ENCODE measurements at regions of chr17 and their contacts with region 1.

Region 1: DNA sequence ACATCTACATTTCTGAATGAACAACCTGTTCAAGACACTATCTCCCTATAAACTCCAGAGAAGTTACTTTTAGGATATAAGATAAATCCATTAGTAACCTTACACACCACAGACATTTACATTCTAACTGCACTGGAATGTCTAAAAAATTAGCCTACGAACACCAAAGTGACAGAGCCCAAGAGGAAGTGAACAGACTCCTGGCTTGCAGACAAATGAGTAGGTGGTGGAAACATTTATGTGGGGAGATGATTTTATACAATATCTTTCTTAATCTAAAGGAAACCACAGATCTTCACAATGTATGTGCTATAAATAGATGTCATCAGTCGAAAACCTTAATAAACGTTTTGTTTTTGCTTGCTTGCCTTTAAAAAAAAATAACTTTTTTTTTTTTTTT is 18.8 kb downstream of the ZNF652 start:
- DNase-seq: peak; percentile 73
- H3K4me3 Mint-ChIP-seq: peak overlapping the region; percentile 89
- H3K27ac Mint-ChIP-seq: peak overlapping the region; percentile 94
- H3K4me1 Mint-ChIP-seq: peaks cover 48% of the 10 kb centered on the region
- H3K27me3 Mint-ChIP-seq: peaks cover 7% of the 10 kb centered on the region

Region 2: DNA sequence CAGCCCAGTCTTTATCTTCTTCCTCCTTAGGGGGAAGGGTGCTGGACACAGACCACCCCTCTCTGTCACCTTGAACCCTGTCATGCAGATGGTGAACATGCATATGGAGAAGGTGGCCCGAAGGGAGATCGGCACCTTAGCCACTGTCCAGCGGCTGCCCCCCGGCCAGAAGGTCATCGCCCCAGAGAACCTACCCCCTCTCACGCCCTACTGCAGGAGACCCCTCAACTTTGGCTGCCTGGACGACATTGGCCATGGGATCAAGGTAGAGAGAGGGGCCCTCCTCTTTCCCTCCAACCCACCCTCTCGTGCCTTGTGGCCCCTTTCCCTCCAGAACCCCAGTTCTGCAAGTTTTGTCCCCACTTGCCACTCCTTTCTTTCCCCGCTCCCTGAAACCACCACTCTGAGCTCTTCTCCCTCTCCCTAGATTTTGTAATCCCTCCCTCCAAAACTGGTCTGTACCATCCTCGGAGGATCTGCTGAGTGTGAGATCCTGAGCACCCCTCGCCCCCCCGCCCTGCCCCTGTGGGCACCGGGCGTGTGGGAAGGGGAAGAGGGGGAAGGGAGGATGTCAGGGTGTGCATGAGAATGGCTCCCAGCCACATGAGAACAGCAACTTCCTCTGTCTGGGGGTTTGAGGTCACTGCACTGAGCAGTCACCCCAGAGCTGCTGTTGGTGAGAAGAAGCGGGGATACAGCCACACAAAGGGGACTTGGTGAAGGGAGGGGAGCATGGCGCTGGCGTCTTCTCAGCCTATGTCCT is 125.4 kb before region 1 on chr17:
- intact Hi-C with region 1: loop called (anchors 5 kb)
- DNase-seq: peak; percentile 91
- H3K4me3 Mint-ChIP-seq: peak overlapping the region; percentile 80
- H3K27ac Mint-ChIP-seq: peak overlapping the region; percentile 87
- H3K4me1 Mint-ChIP-seq: peaks cover 55% of the 10 kb centered on the region
- H3K27me3 Mint-ChIP-seq: no peaks in the 10 kb centered on the region

Region 3: DNA sequence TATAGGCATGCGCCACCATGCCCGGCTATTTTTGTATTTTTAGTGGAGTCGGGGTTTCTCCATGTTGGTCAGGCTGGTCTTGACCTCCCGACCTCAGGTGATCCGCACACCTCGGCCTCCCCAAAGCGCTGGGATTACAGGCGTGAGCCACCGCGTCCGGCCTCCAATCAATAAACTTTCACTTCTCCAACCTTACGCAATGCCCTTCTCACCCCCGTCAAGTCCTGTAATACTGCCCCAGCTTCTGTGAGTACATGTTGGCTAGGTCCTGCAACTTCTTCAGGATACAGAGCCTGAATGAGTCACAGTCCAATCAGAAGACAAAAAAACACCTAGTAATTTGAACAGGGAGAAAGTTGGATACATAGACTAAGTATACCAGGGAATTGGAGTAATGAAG is 65.6 kb before region 1 on chr17:
- intact Hi-C with region 1: no loop called
- DNase-seq: no peak
- H3K4me3 Mint-ChIP-seq: no peak overlapping the region
- H3K27ac Mint-ChIP-seq: no peak overlapping the region
- H3K4me1 Mint-ChIP-seq: no peaks in the 10 kb centered on the region
- H3K27me3 Mint-ChIP-seq: peaks cover 3% of the 10 kb centered on the region

Region 4: DNA sequence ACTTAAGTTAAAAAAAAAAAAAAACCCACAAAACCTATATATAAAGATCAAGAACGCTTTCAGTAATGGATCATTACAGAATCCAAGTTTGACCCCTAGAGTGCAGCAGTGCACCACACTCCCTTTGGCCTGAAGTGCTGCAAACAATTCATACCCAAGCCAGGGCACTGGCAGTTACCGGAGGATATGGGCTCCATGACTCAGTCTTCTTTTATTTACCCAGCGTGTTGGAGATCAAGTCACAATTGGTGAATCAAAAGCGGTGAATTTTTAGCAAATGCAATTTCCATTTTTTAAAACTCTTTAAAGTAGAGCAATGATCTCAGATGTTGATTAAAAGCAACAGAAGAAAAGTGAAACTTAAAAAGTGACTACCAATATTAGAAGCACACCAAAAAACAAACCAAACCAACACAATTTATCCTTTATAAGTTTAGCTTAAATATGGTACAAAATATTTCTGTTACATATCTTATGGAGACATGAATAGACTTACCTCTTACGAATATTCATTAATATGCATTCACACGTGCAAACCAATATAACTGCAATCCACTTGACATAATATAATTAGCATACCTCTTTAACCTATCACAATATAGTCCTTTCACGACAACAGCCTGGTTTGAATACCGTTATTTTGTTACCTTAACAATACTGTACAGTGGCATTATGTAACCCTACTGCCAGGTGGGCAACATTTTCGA is 27.6 kb before region 1 on chr17:
- intact Hi-C with region 1: loop called (anchors 2 kb)
- DNase-seq: peak; percentile 93
- H3K4me3 Mint-ChIP-seq: peak overlapping the region; percentile 69
- H3K27ac Mint-ChIP-seq: peak overlapping the region; percentile 63
- H3K4me1 Mint-ChIP-seq: peaks cover 19% of the 10 kb centered on the region
- H3K27me3 Mint-ChIP-seq: no peaks in the 10 kb centered on the region

Region 5: GRCh38 chr17:49361902-49362722 is 18.8 kb after region 1 on chr17 and contains the start of gene ZNF652:
- intact Hi-C with region 1: loop called (anchors 1 kb)
- DNase-seq: peak; percentile 98
- H3K4me3 Mint-ChIP-seq: peak within 1 kb of the TSS; percentile 93
- H3K27ac Mint-ChIP-seq: peak within 1 kb of the TSS; percentile 93
- H3K4me1 Mint-ChIP-seq: peaks cover 56% of the 10 kb centered on the region
- H3K27me3 Mint-ChIP-seq: no peaks in the 10 kb centered on the region
- total RNA-seq, gene ZNF652: 4.5 and 5.5 TPM in 2 replicates

Region 6: GRCh38 chr17:49390548-49391324 is 47.5 kb after region 1 on chr17:
- intact Hi-C with region 1: loop called (anchors 2 kb)
- DNase-seq: peak; percentile 60
- H3K4me3 Mint-ChIP-seq: peak overlapping the region; percentile 50
- H3K27ac Mint-ChIP-seq: peak overlapping the region; percentile 80
- H3K4me1 Mint-ChIP-seq: peaks cover 58% of the 10 kb centered on the region
- H3K27me3 Mint-ChIP-seq: no peaks in the 10 kb centered on the region

Region 7: DNA sequence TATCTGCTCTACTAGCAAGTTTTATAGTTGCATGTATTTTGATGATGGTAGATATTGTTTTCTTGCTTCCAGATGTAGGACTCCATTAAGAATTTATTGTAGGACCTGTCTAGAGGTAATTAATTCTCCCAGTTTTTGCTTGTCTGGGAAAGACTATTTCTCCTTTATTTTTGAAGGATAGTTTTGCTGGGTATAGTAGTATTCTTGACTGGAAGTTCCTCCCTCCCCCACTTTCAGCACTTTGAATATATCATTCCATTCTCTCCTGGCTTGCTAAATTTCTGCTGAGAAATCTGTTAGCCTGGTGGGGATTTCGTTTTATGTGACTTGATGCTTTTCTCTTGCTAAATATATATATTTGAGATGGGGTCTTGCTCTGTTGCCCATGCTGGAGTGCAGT is 79.4 kb after region 1 on chr17:
- intact Hi-C with region 1: no loop called
- DNase-seq: no peak
- H3K4me3 Mint-ChIP-seq: no peak overlapping the region
- H3K27ac Mint-ChIP-seq: no peak overlapping the region
- H3K4me1 Mint-ChIP-seq: no peaks in the 10 kb centered on the region
- H3K27me3 Mint-ChIP-seq: peaks cover 29% of the 10 kb centered on the region

Region 8: DNA sequence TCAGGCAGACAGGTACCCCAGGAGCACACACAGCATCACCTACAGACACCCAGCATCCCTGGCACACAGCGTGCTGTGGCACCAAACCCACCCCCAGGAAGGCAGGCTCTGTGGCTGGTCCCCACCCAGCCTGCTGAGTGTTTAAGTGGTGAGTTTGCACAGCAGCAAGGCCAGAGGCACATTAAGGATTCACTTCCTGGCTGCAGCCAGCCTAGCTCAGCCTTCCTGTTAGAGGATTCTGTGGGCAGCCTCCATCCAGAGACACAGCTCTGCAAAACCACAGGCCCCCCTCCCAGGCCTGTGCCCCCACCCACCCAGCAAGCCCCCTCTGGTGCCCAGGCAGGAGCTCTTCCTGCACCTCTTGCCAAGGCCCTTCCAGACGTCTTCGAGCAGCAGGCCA is 107.5 kb after region 1 on chr17:
- intact Hi-C with region 1: no loop called
- DNase-seq: no peak
- H3K4me3 Mint-ChIP-seq: no peak overlapping the region
- H3K27ac Mint-ChIP-seq: no peak overlapping the region
- H3K4me1 Mint-ChIP-seq: peaks cover 7% of the 10 kb centered on the region
- H3K27me3 Mint-ChIP-seq: peaks cover 6% of the 10 kb centered on the region

Measured in activated CD4-positive, alpha-beta T cell treated with anti-CD3 and anti-CD28 coated beads, Interleukin-2, amount 10 ng/mL, durations not matched to agents 24 days and 14 days (primary cell).